ENCODE measurements at regions of chr2 and their contacts with region 1.

Region 1: GRCh38 chr2:142180820-142181535 is 50.2 kb upstream of the LRP1B start:
- H3K4me3 ChIP-seq: no peak overlapping the region
- H3K27ac ChIP-seq: no peak overlapping the region; the same call in 1 of the 2 replicates
- H3K4me1 ChIP-seq: peaks cover 8% of the 10 kb centered on the region
- CTCF ChIP-seq: peak; percentile 26; the same call in 1 of the 2 replicates

Region 2: DNA sequence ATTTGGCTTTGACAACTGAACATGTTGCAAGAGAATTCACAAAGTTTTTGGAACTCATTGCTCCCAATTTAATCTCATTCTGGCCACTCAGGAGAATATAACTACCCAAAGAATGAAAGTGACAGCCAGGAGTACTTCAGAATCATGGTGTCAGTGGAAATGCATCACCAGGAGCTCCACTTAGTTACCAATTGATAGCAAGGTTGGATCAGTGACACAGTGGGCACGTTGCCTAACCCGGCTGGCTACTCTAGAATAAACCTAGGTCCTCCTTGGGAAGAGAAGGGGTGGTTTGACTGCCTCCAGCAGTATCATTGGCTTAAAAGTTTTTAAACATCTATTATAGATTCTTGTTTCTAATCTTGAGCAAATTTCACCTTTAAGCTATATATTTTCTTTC is 10.1 kb before region 1 on chr2:
- CTCF ChIA-PET with region 1: interaction called, 13 read pairs
- POLR2A ChIA-PET with region 1: no interaction called
- H3K4me3 ChIP-seq: no peak overlapping the region
- H3K27ac ChIP-seq: no peak overlapping the region
- H3K4me1 ChIP-seq: peaks cover 1% of the 10 kb centered on the region
- CTCF ChIP-seq: no peak

Measured in HEK293 (cell line).